ENCODE measurements at regions of chr5 and their contacts with region 1.

Region 1: GRCh38 chr5:66646621-66647020 is 50.4 kb downstream of the MAST4 start:
- DNase-seq: no peak
- ATAC-seq: no peak
- H3K4me3 ChIP-seq: no peak overlapping the region
- H3K27ac ChIP-seq: no peak overlapping the region
- H3K4me1 ChIP-seq: no peaks in the 10 kb centered on the region
- H3K27me3 ChIP-seq: peaks cover 4% of the 10 kb centered on the region; the same call in 1 of the 2 replicates
- CTCF ChIP-seq: no peak

Region 2: DNA sequence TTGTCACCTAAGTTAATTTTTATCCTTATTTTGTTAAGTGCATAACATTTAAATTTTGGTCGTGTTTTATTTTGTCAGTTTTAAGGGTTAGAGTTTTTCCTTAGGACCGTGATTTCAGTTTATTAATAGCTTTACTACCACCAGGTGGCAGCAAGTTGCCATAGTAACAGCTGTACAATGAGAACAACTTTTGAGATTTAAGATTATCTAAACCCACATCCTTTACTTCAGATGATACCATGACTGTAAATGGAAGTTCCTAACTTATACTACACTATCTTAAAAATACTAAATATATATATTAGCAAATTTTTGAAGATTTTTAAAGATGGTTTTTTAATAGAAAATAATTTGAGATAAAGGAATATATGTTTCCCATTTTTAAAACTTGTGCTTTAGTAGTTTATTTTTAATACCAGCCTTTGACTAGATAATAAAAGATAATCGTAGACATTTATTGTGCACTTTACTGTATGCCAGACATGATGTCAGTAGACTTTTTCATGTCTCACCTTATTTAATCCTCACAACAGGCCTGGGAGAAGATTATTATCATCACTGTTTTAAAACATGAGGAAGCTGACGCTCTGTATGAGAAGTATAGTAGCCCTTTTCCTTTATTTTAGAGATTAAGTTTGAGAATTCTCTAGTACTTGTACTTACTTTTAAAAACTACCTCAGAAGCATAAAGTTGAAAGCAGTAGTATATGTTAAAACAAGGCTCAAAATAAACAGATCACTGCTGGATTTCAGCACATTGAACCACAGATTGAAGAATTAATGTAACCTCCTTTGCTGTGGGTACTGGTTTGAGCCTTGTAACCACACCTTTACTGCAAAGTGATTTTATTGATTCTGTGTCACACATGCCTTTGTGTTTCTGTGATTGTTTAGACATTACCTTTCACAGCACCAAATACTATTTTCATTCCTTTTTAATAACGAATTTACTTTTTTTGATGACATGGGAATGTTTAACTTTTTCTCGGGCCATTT is 475.0 kb before region 1 on chr5:
- CTCF ChIA-PET with region 1: interaction called, 14 read pairs
- POLR2A ChIA-PET with region 1: no interaction called
- in situ Hi-C with region 1: no loop called
- intact Hi-C with region 1: no loop called
- DNase-seq: no peak
- ATAC-seq: no peak
- H3K4me3 ChIP-seq: no peak overlapping the region
- H3K27ac ChIP-seq: no peak overlapping the region
- H3K4me1 ChIP-seq: no peaks in the 10 kb centered on the region
- H3K27me3 ChIP-seq: no peaks in the 10 kb centered on the region
- CTCF ChIP-seq: peak; percentile 68; the same call in 1 of the 2 replicates

Region 3: GRCh38 chr5:66661149-66661548 is 14.5 kb after region 1 on chr5:
- CTCF ChIA-PET with region 1: no interaction called
- POLR2A ChIA-PET with region 1: no interaction called
- in situ Hi-C with region 1: no loop called
- intact Hi-C with region 1: no loop called
- DNase-seq: no peak
- ATAC-seq: no peak
- H3K4me3 ChIP-seq: no peak overlapping the region
- H3K27ac ChIP-seq: no peak overlapping the region
- H3K4me1 ChIP-seq: no peaks in the 10 kb centered on the region
- H3K27me3 ChIP-seq: peaks cover 4% of the 10 kb centered on the region; the same call in 1 of the 2 replicates
- CTCF ChIP-seq: no peak

Region 4: GRCh38 chr5:66717455-66718373 is 71.1 kb after region 1 on chr5:
- CTCF ChIA-PET with region 1: no interaction called
- POLR2A ChIA-PET with region 1: no interaction called
- in situ Hi-C with region 1: no loop called
- intact Hi-C with region 1: no loop called
- DNase-seq: no peak
- ATAC-seq: no peak
- H3K4me3 ChIP-seq: no peak overlapping the region
- H3K27ac ChIP-seq: no peak overlapping the region
- H3K4me1 ChIP-seq: no peaks in the 10 kb centered on the region
- H3K27me3 ChIP-seq: no peaks in the 10 kb centered on the region; the same call in 1 of the 2 replicates
- CTCF ChIP-seq: no peak

Measured in Panc1 (cell line).